Dendritic cell treated with granulocyte-macrophage colony-stimulating factor and Interleukin-4, amounts not matched to agents 40 ng/mL and 50 ng/mL, for 4 days (primary cell): ENCODE measurements at regions of chr2 and their contacts with region 1.

Region 1: DNA sequence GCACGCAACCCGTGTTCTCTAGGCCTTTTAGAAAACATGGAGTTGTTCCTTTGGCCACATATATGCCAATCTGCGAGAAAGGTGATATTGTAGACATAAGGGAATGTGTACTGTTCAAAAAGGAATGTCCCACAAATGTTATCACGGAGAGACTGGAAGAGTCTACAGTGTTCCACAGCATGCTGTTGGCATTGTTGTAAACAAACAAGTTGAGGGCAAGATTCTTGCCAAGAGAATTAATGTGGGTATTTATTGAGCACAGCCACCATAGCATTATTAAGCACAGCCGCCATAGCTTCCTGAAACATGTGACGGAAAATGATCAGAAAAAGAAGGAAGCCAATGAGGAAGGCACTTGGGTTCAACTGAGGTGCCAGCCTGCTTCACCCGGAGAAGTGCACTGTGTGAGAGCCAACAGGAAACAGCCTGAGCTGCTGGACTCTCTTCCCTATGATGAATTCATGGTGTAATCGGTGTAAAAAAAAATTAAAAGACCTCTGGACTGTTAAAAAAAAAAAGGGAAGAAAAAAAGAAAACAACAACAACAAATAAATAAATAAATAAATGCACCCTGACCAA is 29.0 kb upstream of the REL start:
- H3K4me3 Mint-ChIP-seq: no peak overlapping the region
- H3K27ac Mint-ChIP-seq: peak overlapping the region; percentile 64
- H3K4me1 Mint-ChIP-seq: peaks cover 54% of the 10 kb centered on the region
- H3K27me3 Mint-ChIP-seq: no peaks in the 10 kb centered on the region

Region 2: GRCh38 chr2:60867848-60868247 is 15.5 kb after region 1 on chr2:
- intact Hi-C with region 1: loop called (anchors 2 kb)
- H3K4me3 Mint-ChIP-seq: peak overlapping the region; percentile 13
- H3K27ac Mint-ChIP-seq: peak overlapping the region; percentile 88
- H3K4me1 Mint-ChIP-seq: peaks cover 25% of the 10 kb centered on the region
- H3K27me3 Mint-ChIP-seq: no peaks in the 10 kb centered on the region

Region 3: GRCh38 chr2:60976875-60977561 is 124.6 kb after region 1 on chr2:
- intact Hi-C with region 1: no loop called
- H3K4me3 Mint-ChIP-seq: no peak overlapping the region
- H3K27ac Mint-ChIP-seq: no peak overlapping the region
- H3K4me1 Mint-ChIP-seq: peaks cover 21% of the 10 kb centered on the region
- H3K27me3 Mint-ChIP-seq: no peaks in the 10 kb centered on the region